Mammary epithelial cell (primary cell): ENCODE measurements at regions of chr5 and their contacts with region 1.

Region 1: GRCh38 chr5:141094481-141095262 is at the start of gene PCDHB2:
- DNase-seq: peak; percentile 71
- H3K4me3 ChIP-seq: peak within 1 kb of the TSS; percentile 58 to 69 (median 59)
- H3K27ac ChIP-seq: peak within 1 kb of the TSS; percentile 32
- H3K4me1 ChIP-seq: no peaks in the 10 kb centered on the region
- H3K27me3 ChIP-seq: no peaks in the 10 kb centered on the region
- CTCF ChIP-seq: peak; percentile 49 to 57
- total RNA-seq, gene PCDHB2: 2.2 to 6.8 TPM

Region 2: GRCh38 chr5:141001854-141002604 is 92.6 kb before region 1 on chr5:
- CTCF ChIA-PET with region 1: no interaction called
- dilution Hi-C with region 1: no loop called
- in situ Hi-C with region 1: no loop called
- intact Hi-C with region 1: no loop called
- DNase-seq: peak; percentile 52
- H3K4me3 ChIP-seq: peak overlapping the region; percentile 39 to 56 (median 51)
- H3K27ac ChIP-seq: peak overlapping the region; percentile 93
- H3K4me1 ChIP-seq: peaks cover 38% of the 10 kb centered on the region
- H3K27me3 ChIP-seq: no peaks in the 10 kb centered on the region
- CTCF ChIP-seq: no peak

Region 3: GRCh38 chr5:141192110-141192732 is 97.5 kb after region 1 on chr5 and contains the start of gene PCDHB10:
- CTCF ChIA-PET with region 1: interaction called, 6 read pairs
- dilution Hi-C with region 1: no loop called
- in situ Hi-C with region 1: no loop called
- intact Hi-C with region 1: loop called (anchors 2 kb)
- DNase-seq: peak; percentile 40
- H3K4me3 ChIP-seq: peak within 1 kb of the TSS in 2 of 3 experiments; percentile 26 to 29
- H3K27ac ChIP-seq: no peak within 1 kb of the TSS
- H3K4me1 ChIP-seq: no peaks in the 10 kb centered on the region
- H3K27me3 ChIP-seq: no peaks in the 10 kb centered on the region
- CTCF ChIP-seq: peak; percentile 63 to 71
- total RNA-seq, gene PCDHB10: 0.56 to 1.0 TPM

Region 4: DNA sequence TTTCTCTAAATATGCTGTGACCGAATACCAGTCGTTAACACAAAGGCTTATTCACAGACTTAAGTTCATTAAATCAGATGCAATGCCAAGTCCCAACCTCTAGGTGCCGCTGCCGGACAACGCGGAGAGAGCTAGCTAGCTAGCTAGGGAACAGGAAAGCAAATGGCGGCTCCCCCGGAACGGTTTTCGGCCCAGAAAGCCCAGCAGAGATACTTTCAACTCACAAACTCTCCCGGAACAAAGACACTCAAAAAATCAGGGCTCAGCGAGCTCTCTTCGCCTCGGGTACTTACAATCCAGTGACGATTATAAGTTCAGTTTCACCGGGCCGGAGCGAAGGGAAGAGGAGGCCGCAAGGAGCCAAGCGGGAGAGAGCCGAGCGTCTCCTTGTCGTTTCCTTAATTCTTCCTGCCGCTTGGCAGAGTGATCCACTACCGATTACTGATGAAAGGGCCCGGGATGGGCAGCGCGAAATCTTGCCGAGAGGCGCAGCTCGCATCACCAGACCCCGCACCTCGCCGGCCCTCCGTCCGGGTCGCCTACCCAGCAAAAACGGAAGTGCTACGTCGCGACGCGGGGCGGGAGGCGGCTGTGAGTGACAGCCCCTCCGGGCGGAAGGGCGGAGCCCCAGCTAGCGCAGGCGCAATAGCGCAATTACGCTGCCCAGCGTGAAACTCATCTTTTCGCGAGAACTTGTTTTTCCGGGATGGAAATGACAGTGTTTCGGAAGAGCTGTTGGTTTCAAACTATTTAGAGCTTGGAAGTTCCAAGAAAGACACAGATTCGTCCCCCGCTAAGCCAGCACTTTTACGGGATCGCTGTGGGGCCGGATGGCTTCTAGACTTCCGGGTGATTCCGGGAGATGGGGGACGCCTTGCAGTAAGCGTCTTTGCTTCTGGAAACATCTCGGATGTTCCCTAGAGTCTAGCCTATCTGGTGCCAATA is 225.8 kb after region 1 on chr5 and contains the start of gene TAF7:
- CTCF ChIA-PET with region 1: no interaction called
- dilution Hi-C with region 1: no loop called
- in situ Hi-C with region 1: no loop called
- intact Hi-C with region 1: loop called (anchors 5 kb)
- DNase-seq: peak; percentile 87
- H3K4me3 ChIP-seq: peak within 1 kb of the TSS; percentile 65 to 91 (median 73)
- H3K27ac ChIP-seq: peak within 1 kb of the TSS; percentile 82
- H3K4me1 ChIP-seq: peaks cover 8% of the 10 kb centered on the region
- H3K27me3 ChIP-seq: no peaks in the 10 kb centered on the region
- CTCF ChIP-seq: peak; percentile 87 to 91
- total RNA-seq, gene TAF7: 45.2 to 46.0 TPM